Gastrocnemius medialis (tissue), 4 donors: ENCODE measurements at regions of chr11 and their contacts with region 1.

Region 1: GRCh38 chr11:13229711-13230318 is 47.8 kb upstream of the BMAL1 start:
- DNase-seq: no peak
- ATAC-seq: no peak
- H3K4me3 ChIP-seq: no peak overlapping the region
- H3K27ac ChIP-seq: no peak overlapping the region
- H3K4me1 ChIP-seq: no peaks in the 10 kb centered on the region
- H3K27me3 ChIP-seq: no peaks in the 10 kb centered on the region
- CTCF ChIP-seq: no peak
- POLR2A ChIP-seq: no peak

Region 2: GRCh38 chr11:12717851-12718291 is 511.9 kb before region 1 on chr11:
- in situ Hi-C with region 1: no loop called
- intact Hi-C with region 1: no loop called
- DNase-seq: no peak
- ATAC-seq: no peak
- H3K4me3 ChIP-seq: no peak overlapping the region
- H3K27ac ChIP-seq: no peak overlapping the region
- H3K4me1 ChIP-seq: peaks cover 67 to 92% of the 10 kb centered on the region in 2 donors
- H3K27me3 ChIP-seq: no peaks in the 10 kb centered on the region
- CTCF ChIP-seq: no peak
- POLR2A ChIP-seq: no peak

Region 3: DNA sequence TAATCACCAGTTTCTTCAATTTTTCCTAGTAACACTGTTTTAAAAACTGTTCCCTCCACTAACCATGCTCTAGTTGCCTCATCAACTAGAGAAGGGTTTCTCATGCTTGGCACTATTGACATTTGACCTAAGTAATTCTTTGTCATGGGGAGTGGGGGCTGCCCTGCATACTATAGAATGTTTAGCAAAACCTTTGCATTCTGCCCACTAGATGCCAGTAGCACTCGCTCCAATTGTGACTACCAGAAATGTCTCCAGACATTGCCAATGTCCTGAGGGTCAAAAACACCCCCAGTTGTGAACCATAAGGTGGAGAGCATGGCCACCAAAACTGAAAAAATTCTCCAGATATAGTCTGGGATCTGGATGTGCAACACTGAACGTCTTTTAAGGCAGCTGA is 20.2 kb after region 1 on chr11:
- in situ Hi-C with region 1: no loop called
- intact Hi-C with region 1: no loop called
- DNase-seq: no peak
- ATAC-seq: no peak
- H3K4me3 ChIP-seq: no peak overlapping the region
- H3K27ac ChIP-seq: no peak overlapping the region
- H3K4me1 ChIP-seq: no peaks in the 10 kb centered on the region
- H3K27me3 ChIP-seq: no peaks in the 10 kb centered on the region
- CTCF ChIP-seq: peak; percentile 12 to 39 (median 30)
- POLR2A ChIP-seq: no peak

Region 4: GRCh38 chr11:13354335-13354734 is 124.5 kb after region 1 on chr11:
- in situ Hi-C with region 1: loop called in 1 of 4 experiments (anchors 10 kb)
- intact Hi-C with region 1: no loop called
- DNase-seq: no peak
- ATAC-seq: no peak
- H3K4me3 ChIP-seq: no peak overlapping the region
- H3K27ac ChIP-seq: no peak overlapping the region
- H3K4me1 ChIP-seq: no peaks in the 10 kb centered on the region
- H3K27me3 ChIP-seq: no peaks in the 10 kb centered on the region
- CTCF ChIP-seq: no peak
- POLR2A ChIP-seq: no peak